Activated CD4-positive, alpha-beta T cell treated with anti-CD3 and anti-CD28 coated beads for 36 hours (primary cell): ENCODE measurements at regions of chr10 and their contacts with region 1.

Region 1: GRCh38 chr10:52276982-52277381 is 37.1 kb upstream of the DKK1 start:
- DNase-seq: no peak
- ATAC-seq: no peak
- H3K4me3 Mint-ChIP-seq: no peak overlapping the region
- H3K27ac Mint-ChIP-seq: no peak overlapping the region
- H3K4me1 Mint-ChIP-seq: no peaks in the 10 kb centered on the region
- H3K27me3 Mint-ChIP-seq: no peaks in the 10 kb centered on the region

Region 2: DNA sequence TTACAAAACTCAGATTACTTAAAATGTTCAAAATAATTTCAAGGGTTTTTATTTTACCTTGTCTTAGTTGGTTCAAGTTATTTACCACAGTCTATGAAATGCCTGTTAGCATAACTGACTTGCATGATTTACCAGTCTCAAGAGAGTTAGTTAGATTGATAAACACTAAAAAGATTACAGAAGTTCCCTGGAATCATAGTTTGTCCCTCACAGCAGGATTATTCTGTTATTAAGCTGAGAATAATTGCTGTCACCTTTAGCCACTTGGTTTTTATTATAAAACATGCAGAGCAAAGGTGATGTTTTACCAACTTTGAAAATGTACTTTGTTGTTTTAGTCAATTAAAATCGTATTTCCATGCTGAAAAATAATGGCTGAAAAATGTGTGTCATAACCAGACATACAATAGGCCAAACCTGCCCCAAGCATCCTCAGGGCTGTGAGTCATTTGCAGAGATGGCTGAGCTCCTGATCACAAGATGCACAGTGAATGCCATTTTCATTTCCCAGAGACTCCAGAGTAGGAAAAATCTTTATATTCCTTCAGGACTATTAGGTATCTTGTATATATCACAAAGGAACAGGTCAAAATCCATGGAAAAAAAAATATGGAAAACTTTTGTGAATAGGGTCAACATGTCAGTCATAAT is 50.7 kb before region 1 on chr10:
- CTCF ChIA-PET with region 1: no interaction called
- POLR2A ChIA-PET with region 1: no interaction called
- intact Hi-C with region 1: loop called in 1 of 2 experiments (anchors 1 kb)
- DNase-seq: no peak
- ATAC-seq: no peak
- H3K4me3 Mint-ChIP-seq: no peak overlapping the region
- H3K27ac Mint-ChIP-seq: no peak overlapping the region
- H3K4me1 Mint-ChIP-seq: no peaks in the 10 kb centered on the region
- H3K27me3 Mint-ChIP-seq: no peaks in the 10 kb centered on the region